ENCODE measurements at regions of chr16 and their contacts with region 1.

Region 1: GRCh38 chr16:30786936-30787612 is at the start of gene ZNF629:
- DNase-seq: peak in 8 of 14 experiments; percentile 12 to 57 (median 37)
- ATAC-seq: peak; percentile 45
- H3K4me3 ChIP-seq: peak within 1 kb of the TSS; percentile 85
- H3K4me3 Mint-ChIP-seq: peak within 1 kb of the TSS; percentile 88
- H3K27ac ChIP-seq: no peak within 1 kb of the TSS
- H3K27ac Mint-ChIP-seq: no peak within 1 kb of the TSS
- H3K4me1 ChIP-seq: peaks cover 20% of the 10 kb centered on the region
- H3K4me1 Mint-ChIP-seq: peaks cover 21% of the 10 kb centered on the region
- H3K27me3 ChIP-seq: peaks cover 7 to 17% of the 10 kb centered on the region in 2 experiments
- H3K27me3 Mint-ChIP-seq: peaks cover 5% of the 10 kb centered on the region
- CTCF ChIP-seq: no peak
- total RNA-seq, gene ZNF629: 1.6 to 1.7 TPM

Region 2: DNA sequence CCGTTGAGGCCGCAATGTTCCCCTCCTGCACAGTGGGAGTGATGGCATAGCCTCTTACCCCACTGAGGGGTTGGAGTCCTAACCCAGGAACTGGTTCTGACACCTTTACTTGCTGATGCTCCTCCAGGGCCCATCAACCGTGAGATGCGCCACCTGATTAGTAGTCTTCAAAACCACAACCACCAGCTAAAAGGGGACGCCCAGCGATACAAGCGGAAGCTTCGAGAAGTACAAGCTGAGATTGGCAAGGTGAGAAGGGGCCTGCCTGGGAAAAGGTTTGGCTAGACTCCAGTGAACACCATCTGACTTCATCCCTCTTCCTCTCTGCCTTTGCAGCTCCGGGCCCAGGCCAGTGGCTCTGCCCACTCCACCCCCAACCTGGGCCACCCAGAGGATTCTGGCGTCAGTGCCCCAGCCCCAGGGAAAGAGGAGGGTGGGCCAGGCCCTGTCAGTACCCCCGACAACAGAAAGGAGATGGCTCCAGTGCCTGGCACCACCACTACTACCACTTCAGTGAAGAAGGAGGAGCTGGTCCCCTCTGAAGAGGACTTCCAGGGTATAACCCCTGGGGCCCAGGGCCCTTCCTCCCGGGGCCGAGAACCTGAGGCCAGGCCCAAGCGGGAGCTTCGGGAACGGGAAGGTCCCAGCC is 19.2 kb before region 1 on chr16:
- CTCF ChIA-PET with region 1: no interaction called
- POLR2A ChIA-PET with region 1: no interaction called
- intact Hi-C with region 1: no loop called
- DNase-seq: peak in 3 of 14 experiments; percentile 49 to 78 (median 64)
- ATAC-seq: no peak
- H3K4me3 ChIP-seq: no peak overlapping the region
- H3K4me3 Mint-ChIP-seq: no peak overlapping the region
- H3K27ac ChIP-seq: no peak overlapping the region
- H3K27ac Mint-ChIP-seq: no peak overlapping the region
- H3K4me1 ChIP-seq: peaks cover 21% of the 10 kb centered on the region
- H3K4me1 Mint-ChIP-seq: peaks cover 17% of the 10 kb centered on the region
- H3K27me3 ChIP-seq: no peaks in the 10 kb centered on the region
- H3K27me3 Mint-ChIP-seq: no peaks in the 10 kb centered on the region
- CTCF ChIP-seq: no peak

Region 3: GRCh38 chr16:30805370-30806169 is 18.5 kb after region 1 on chr16:
- CTCF ChIA-PET with region 1: no interaction called
- POLR2A ChIA-PET with region 1: interaction called, 23 read pairs
- intact Hi-C with region 1: loop called (anchors 1 kb)
- DNase-seq: peak; percentile 28 to 77 (median 56)
- ATAC-seq: peak; percentile 74
- H3K4me3 ChIP-seq: peak overlapping the region; percentile 87
- H3K4me3 Mint-ChIP-seq: peak overlapping the region; percentile 87
- H3K27ac ChIP-seq: peak overlapping the region; percentile 38 to 59
- H3K27ac Mint-ChIP-seq: peak overlapping the region; percentile 52
- H3K4me1 ChIP-seq: peaks cover 21% of the 10 kb centered on the region
- H3K4me1 Mint-ChIP-seq: peaks cover 18% of the 10 kb centered on the region
- H3K27me3 ChIP-seq: no peaks in the 10 kb centered on the region
- H3K27me3 Mint-ChIP-seq: no peaks in the 10 kb centered on the region
- CTCF ChIP-seq: no peak

Measured in CD4-positive, alpha-beta T cell (primary cell).